Breast epithelium (tissue), 4 donors: ENCODE measurements at regions of chr4 and their contacts with region 1.

Region 1: GRCh38 chr4:6250235-6250983 is 19.2 kb upstream of the WFS1 start:
- DNase-seq: no peak
- H3K4me3 ChIP-seq: no peak overlapping the region
- H3K27ac ChIP-seq: no peak overlapping the region
- H3K4me1 ChIP-seq: no peaks in the 10 kb centered on the region
- H3K27me3 ChIP-seq: peaks cover 4 to 26% of the 10 kb centered on the region in 2 donors
- CTCF ChIP-seq: peak; percentile 84 to 90 (median 85)
- POLR2A ChIP-seq: no peak

Region 2: DNA sequence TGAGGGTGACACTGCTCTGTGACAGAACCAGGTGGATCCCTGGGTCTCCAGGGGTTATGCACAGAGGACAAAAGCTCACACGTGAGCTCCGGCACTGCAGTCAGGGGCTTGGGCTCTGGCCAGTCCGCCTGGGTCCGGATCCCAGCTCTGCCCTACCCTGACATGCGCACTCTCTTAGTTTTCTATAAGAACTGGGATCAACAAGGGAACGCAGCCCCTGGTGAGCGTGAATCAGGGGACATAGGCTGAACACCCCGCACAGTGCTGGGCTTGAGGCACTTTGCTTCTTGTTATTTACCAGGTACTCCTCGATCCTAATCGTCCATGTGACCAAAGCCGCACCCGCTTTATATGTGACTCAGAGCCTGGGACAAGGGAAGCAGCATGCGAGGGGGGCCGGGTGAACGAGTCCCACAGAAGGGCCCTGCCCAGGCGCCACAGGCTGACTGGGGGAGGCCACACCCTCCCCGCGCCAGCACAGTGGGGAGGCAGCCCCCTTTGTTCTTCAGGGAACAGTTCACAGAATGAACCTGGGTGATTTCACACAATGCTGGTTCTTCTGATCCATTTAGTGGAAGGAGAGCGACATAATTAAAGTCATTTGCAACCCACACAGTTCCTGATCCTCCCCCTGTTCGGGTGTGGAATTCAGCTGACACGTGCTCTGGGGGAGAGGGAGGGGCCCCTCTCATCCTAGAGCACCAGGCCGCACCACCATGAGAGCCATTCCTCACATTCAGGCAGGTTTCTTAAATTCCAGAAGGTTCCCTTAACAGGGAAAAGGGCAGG is 74.8 kb after region 1 on chr4:
- intact Hi-C with region 1: loop called (anchors 5 kb)
- DNase-seq: peak; percentile 50 to 78
- H3K4me3 ChIP-seq: no peak overlapping the region
- H3K27ac ChIP-seq: peak overlapping the region; percentile 4 to 67
- H3K4me1 ChIP-seq: no peaks in the 10 kb centered on the region
- H3K27me3 ChIP-seq: peaks cover 0 to 12% of the 10 kb centered on the region in 2 donors
- CTCF ChIP-seq: no peak
- POLR2A ChIP-seq: no peak